Right ventricle myocardium inferior (tissue), 1 donor: ENCODE measurements at regions of chr3 and their contacts with region 1.

Region 1: GRCh38 chr3:73100741-73101559 is 39.5 kb downstream of the EBLN2 start:
- DNase-seq: no peak
- ATAC-seq: peak; percentile 87

Region 2: DNA sequence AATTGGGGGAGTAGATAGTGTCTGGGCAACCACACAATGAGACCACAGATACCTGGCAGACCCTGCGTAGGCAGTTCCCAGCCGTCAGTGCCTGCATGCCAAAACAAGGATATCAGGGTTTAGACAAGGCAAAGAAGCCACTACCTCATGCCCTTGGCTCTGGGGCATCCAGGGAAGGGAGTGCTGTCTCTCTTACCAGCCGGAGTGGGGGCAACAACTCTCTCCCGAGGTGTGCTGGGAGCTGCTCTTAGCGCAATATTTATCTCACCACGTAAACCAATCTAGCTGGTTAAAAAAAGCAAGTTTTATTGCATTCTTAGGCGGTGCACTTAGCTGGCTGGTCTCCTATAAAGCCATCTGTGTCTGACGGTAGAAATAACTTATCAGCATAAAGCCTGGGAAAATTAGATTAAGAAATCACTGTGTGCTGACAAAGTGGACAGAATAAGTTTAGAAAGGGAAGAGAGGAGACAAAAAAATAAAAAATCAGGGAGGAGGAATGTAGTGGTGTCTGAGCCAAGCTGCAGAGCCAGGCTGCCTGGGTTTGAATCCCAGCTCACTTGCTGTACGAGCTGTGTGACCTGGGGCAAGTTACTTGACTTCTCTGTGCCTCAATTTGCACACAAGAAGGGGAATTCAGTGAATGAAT is 250.6 kb after region 1 on chr3:
- intact Hi-C with region 1: loop called (anchors 10 kb)
- DNase-seq: peak; percentile 75
- ATAC-seq: peak; percentile 85

Region 3: DNA sequence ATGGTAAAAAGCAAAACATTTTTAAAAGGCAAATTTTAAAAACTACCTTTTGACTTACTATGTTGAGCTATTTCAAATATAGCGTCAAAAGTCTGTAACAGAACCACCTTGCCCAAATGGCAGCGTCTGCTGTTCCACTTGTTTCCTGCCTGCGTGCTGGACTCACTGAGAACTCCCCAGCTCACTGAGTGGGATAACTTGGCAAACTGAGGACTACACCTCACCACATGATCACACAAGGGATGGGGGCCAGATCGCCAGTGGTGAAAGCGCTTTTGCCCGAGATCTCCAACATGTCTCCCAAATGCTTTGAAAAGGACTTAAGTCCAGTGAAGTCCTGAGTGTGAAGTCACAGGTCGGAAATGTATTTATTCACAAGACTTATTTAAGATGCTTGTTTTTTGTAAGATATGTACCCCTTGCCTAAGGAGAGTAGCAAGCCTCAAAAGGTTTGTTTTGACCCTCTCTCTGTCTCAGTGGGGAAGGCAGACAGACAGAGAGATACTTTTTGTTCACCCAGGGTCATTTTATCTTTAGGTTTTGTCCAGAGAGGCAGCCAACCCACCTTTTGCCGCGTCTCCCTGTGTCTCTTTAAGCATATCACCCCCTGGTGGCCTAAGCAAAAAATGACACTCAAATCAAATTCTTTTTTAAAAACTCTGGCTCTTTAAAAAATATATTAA is 331.2 kb after region 1 on chr3:
- intact Hi-C with region 1: loop called (anchors 2 kb)
- DNase-seq: no peak
- ATAC-seq: no peak

Region 4: GRCh38 chr3:73502609-73503583 is 401.9 kb after region 1 on chr3:
- intact Hi-C with region 1: loop called (anchors 2 kb)
- DNase-seq: no peak
- ATAC-seq: peak; percentile 33

Region 5: DNA sequence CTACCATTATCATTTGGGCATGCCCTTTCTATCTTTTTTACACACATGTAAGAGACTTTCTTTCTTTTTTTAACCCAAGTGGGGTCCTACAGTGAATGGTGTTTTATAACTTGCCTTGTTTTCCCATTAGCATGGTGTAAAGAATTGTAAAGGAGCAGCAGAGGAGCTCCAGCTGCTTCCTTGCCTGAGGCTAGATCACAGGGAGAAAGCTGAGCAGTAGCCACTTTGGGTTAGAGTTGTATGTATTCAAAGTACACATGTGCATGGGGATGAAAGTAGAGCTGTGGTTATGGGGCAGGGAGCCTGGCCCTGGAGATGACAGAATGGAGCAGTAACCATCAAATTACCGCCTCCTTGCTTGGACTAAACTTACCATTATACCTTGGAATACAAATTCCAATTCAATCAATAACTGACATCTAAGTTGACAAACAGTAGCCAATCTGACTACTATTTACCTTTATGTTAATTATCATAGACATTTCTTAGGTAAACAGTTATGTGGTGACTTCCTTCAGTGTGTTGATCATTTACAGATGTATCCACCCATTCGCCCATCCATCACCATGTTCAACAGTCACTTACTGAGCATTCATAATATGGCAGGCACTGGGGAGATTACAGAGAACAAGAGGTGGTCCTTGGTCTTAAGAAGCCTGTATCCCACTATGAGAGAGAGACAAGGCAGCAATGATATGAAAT is 755.0 kb after region 1 on chr3:
- intact Hi-C with region 1: loop called (anchors 10 kb)
- DNase-seq: no peak
- ATAC-seq: no peak